ENCODE measurements at regions of chr12 and their contacts with region 1.

Region 1: GRCh38 chr12:119412811-119413794 is 78.6 kb downstream of the CCDC60 start:
- DNase-seq: peak; percentile 65
- H3K4me3 ChIP-seq: no peak overlapping the region
- H3K27ac ChIP-seq: no peak overlapping the region
- H3K4me1 ChIP-seq: no peaks in the 10 kb centered on the region
- H3K27me3 ChIP-seq: no peaks in the 10 kb centered on the region
- CTCF ChIP-seq: peak; percentile 82

Region 2: DNA sequence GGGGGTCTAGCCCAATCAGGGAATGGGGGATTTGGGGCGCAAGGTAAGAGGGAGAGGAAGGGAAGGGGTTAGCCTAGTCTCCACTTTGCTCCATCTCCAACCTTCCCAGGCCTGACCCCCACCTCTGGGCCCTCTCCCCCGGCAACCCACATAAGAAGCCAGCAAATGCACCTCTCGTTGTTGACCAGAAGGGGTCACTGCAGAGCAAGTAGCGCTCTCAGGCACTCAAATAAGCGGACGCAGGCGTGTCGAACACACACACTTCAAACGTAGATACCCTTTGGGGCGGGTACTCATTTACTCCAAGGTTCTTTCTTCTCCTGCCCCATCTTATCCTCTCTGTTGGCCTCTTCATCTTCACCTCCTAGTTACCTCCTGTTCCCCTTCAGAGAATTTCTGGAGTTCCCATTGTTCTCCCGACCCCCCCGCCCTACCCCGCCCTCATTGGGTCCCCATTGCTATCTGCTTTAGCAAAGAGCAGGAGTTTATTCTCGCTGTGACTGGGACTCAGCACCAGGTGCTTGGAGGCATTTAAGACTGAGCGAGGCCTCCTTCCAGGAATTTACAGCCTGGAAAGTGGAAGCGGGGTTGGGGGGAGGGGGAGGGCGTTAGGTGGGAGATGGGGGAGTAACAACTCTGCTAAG is 433.2 kb before region 1 on chr12:
- intact Hi-C with region 1: loop called (anchors 5 kb)
- DNase-seq: peak; percentile 28
- H3K4me3 ChIP-seq: no peak overlapping the region
- H3K27ac ChIP-seq: no peak overlapping the region
- H3K4me1 ChIP-seq: no peaks in the 10 kb centered on the region
- H3K27me3 ChIP-seq: peaks cover 19% of the 10 kb centered on the region
- CTCF ChIP-seq: peak; percentile 45

Region 3: DNA sequence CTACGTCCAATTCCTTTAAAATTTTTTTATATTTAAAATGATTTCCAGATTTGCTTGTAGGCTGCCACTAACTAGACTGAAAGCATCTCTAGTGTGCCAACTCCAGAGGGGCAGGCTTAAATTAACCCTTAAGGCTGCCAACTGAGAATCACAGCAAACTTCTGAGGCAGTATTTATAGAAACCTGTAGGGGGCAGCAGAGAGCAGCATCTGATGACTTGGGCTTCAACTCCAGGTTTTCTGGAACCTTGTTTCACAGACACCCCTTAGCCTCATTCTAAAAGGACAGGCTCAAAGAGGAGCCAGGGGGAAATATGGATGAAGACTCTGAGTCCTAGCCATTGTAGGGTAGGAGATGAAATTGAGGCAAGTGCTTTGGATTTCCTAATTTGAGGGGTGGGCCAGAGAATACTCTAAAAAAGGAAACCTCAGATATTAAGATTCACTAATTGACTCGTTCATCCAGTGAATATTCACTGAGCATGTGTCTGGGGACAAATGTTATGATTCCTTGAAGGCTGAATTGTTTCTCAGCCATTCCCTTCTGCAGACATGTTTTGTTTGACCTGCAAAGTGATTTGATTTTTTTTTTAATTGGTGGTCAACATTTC is 297.7 kb before region 1 on chr12:
- intact Hi-C with region 1: loop called (anchors 2 kb)
- DNase-seq: peak; percentile 39
- H3K4me3 ChIP-seq: no peak overlapping the region
- H3K27ac ChIP-seq: no peak overlapping the region
- H3K4me1 ChIP-seq: no peaks in the 10 kb centered on the region
- H3K27me3 ChIP-seq: no peaks in the 10 kb centered on the region
- CTCF ChIP-seq: peak; percentile 87

Region 4: GRCh38 chr12:119208622-119209061 is 204.5 kb before region 1 on chr12:
- intact Hi-C with region 1: loop called (anchors 10 kb)
- DNase-seq: peak; percentile 45
- H3K4me3 ChIP-seq: no peak overlapping the region
- H3K27ac ChIP-seq: no peak overlapping the region
- H3K4me1 ChIP-seq: no peaks in the 10 kb centered on the region
- H3K27me3 ChIP-seq: no peaks in the 10 kb centered on the region
- CTCF ChIP-seq: no peak